BJ (cell line): ENCODE measurements at regions of chr2 and their contacts with region 1.

Region 1: DNA sequence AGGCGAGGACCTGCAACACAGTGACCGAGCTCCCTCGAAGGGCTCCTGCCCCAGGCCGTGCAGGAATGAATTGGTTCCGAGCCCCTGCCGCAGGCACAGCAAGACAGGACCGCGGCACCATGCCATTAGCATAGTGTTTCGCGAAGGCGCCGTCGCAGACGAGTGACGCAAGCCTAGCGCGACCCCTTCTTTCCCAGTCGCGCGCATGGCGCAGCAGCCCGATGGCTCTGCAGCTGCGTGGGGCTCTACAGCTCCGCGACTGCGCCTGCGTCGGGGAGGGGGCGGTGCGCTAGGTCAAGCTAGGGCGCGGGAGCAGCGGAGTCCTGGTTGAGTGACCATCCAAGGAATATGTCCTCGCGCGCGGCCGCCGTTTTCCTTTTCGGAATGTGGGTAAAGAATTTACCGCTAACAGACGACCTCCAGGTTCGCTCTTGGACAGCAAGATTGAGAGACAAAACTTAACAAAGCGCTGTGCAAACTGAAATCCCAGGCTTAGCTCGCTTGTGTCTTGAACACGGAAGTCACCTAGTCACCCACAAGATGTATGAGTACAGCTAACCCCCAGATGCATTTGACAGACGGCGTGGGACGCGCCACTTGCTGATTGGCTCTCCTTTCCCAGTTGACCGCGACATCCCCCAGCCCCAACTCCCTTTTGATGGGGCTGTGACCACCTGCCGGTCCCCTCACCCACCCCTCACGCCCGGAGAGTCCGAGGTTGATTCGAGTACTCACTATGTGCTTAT is at the start of gene TRMT61B:
- DNase-seq: peak; percentile 60
- H3K4me3 ChIP-seq: peak within 1 kb of the TSS; percentile 68
- H3K27me3 ChIP-seq: no peaks in the 10 kb centered on the region
- CTCF ChIP-seq: no peak
- polyA plus RNA-seq, gene TRMT61B: 8.0 and 12.0 TPM in 2 replicates

Region 2: DNA sequence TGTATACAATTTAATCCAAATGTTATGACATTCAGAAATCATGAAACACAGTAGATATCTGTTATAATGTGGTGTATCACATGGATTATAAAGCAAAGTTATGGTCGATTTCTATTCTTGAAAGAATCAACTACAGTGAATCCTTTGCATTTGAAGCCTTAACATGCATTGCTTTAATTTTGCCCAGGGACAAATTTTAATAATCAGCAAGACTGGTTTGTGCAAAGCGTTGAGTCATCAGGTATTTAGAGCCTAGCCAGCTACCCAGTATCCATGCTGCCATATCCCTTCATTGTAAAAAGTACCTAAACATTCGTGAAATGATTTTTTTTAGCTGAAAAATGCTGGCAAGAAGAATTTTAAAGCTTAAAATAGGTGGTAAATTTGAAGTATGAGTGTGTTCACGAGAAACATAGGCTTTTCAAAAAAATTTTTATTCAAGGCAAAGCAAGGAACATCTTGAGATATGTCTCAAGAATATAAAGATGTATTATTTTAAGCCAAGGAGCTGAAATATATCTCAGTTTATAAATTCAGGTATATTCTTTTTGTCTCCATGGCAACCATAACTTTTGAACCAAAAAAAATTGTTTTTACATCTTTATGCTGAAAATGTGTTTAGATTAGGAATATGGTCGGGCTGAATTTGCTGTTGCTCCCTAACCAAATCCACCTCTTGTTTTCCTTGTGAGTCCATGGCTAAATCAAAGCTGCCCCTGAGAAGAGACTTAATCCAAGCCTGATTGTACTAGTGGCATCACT is 68.4 kb before region 1 on chr2:
- CTCF ChIA-PET with region 1: no interaction called
- POLR2A ChIA-PET with region 1: no interaction called
- DNase-seq: no peak
- H3K4me3 ChIP-seq: no peak overlapping the region
- H3K27me3 ChIP-seq: no peaks in the 10 kb centered on the region
- CTCF ChIP-seq: no peak

Region 3: DNA sequence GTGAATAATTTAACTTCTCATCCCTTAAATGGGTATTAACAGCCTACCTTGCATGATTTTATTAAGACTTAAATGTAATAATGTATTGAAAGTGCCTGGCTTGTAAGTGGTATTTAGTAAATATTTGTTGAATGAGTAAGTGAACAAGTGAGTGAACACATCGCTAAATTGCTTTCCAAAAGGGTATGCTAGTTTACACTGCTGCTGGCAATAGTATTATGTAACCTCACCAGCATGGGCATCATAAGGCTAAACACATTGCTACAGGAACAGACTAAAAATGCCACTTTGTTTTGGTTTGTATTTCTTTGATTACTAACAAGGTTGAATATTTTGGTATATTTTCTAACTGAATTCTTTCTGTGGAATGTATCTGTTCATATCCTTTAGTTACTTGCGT is 34.0 kb after region 1 on chr2:
- CTCF ChIA-PET with region 1: interaction called, 3 read pairs
- POLR2A ChIA-PET with region 1: interaction called, 25 read pairs
- DNase-seq: no peak
- H3K4me3 ChIP-seq: no peak overlapping the region
- H3K27me3 ChIP-seq: no peaks in the 10 kb centered on the region
- CTCF ChIP-seq: no peak